Calu3 (cell line): ENCODE measurements at regions of chrX and their contacts with region 1.

Region 1: GRCh38 chrX:103214870-103215424 is at the start of gene BEX4:
- DNase-seq: peak; percentile 2
- H3K4me3 Mint-ChIP-seq: no peak within 1 kb of the TSS
- H3K27ac Mint-ChIP-seq: no peak within 1 kb of the TSS
- H3K4me1 Mint-ChIP-seq: no peaks in the 10 kb centered on the region
- H3K27me3 Mint-ChIP-seq: peaks cover 15% of the 10 kb centered on the region
- CTCF ChIP-seq: no peak
- total RNA-seq, gene BEX4: not detected in 2 replicates

Region 2: DNA sequence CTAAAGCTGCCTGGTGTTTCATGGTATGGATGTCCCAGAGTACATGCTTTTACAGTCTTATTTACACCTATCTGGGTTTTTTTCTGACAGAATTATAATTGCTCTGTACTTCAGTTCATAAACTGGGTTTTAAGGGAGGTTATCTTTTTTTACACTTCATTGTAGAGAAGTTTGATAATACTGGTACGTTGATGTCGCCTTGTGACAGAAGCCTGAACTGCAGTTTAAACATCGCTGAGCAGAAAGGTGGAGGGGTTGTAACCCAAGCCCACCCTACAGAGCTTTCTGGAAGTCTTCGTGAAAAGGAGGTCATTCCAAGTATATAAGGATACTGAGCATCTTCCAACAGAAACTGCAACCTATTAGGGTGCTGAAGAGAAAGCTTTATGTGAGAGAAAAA is 197.4 kb before region 1 on chrX:
- CTCF ChIA-PET with region 1: no interaction called
- intact Hi-C with region 1: no loop called
- DNase-seq: no peak
- H3K4me3 Mint-ChIP-seq: no peak overlapping the region
- H3K27ac Mint-ChIP-seq: no peak overlapping the region
- H3K4me1 Mint-ChIP-seq: no peaks in the 10 kb centered on the region
- H3K27me3 Mint-ChIP-seq: peaks cover 35% of the 10 kb centered on the region
- CTCF ChIP-seq: no peak

Region 3: GRCh38 chrX:103151799-103152198 is 63.1 kb before region 1 on chrX:
- CTCF ChIA-PET with region 1: no interaction called
- intact Hi-C with region 1: no loop called
- DNase-seq: no peak
- H3K4me3 Mint-ChIP-seq: no peak overlapping the region
- H3K27ac Mint-ChIP-seq: peak overlapping the region; percentile 56
- H3K4me1 Mint-ChIP-seq: peaks cover 19% of the 10 kb centered on the region
- H3K27me3 Mint-ChIP-seq: no peaks in the 10 kb centered on the region
- CTCF ChIP-seq: no peak

Region 4: GRCh38 chrX:103248553-103248952 is 33.6 kb after region 1 on chrX:
- CTCF ChIA-PET with region 1: no interaction called
- intact Hi-C with region 1: loop called (anchors 1 kb)
- DNase-seq: no peak
- H3K4me3 Mint-ChIP-seq: no peak overlapping the region
- H3K27ac Mint-ChIP-seq: no peak overlapping the region
- H3K4me1 Mint-ChIP-seq: no peaks in the 10 kb centered on the region
- H3K27me3 Mint-ChIP-seq: peaks cover 21% of the 10 kb centered on the region
- CTCF ChIP-seq: no peak

Region 5: DNA sequence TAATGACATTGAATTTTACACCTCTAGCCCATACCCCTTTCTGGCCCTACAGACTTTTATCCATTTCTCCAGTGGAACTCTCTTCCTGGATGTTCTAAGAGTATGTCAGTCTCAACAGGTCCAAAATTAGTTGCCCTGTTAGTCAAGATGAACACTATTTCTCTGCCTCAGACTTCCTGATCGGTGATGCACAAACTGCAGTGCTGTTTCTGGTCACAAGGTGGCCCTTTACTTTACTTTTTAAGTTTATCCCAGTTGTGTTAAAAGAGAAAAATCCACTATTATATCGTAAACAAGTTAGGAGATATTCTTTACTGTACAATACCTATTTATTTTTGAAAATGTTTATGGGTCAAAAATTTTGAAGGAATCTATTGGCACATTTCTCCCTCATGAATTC is 128.2 kb after region 1 on chrX:
- CTCF ChIA-PET with region 1: no interaction called
- intact Hi-C with region 1: loop called (anchors 5 kb)
- DNase-seq: peak; percentile 43
- H3K4me3 Mint-ChIP-seq: no peak overlapping the region
- H3K27ac Mint-ChIP-seq: no peak overlapping the region
- H3K4me1 Mint-ChIP-seq: no peaks in the 10 kb centered on the region
- H3K27me3 Mint-ChIP-seq: no peaks in the 10 kb centered on the region
- CTCF ChIP-seq: peak; percentile 36

Region 6: DNA sequence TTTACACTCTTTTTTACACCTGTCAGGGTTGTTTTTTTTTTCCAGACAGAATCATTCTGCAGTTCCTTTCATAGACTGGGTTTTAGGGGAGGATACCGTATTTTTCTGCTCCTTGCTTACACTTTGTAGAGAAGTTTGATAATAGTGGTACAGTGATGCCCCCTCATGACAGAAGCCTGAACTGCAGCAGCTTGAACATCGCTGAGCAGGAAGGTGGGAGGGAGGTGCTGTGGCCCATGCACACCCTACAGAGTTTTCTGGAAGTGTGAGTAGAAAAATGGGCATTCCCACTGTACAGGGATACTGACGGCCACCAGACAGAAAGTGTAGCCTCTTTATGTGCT is 249.8 kb after region 1 on chrX:
- CTCF ChIA-PET with region 1: interaction called, 10 read pairs
- intact Hi-C with region 1: loop called (anchors 1 kb)
- DNase-seq: peak; percentile 78
- H3K4me3 Mint-ChIP-seq: no peak overlapping the region
- H3K27ac Mint-ChIP-seq: no peak overlapping the region
- H3K4me1 Mint-ChIP-seq: peaks cover 18% of the 10 kb centered on the region
- H3K27me3 Mint-ChIP-seq: no peaks in the 10 kb centered on the region
- CTCF ChIP-seq: peak; percentile 75

Region 7: GRCh38 chrX:103488332-103488731 is 273.4 kb after region 1 on chrX:
- CTCF ChIA-PET with region 1: interaction called, 6 read pairs
- intact Hi-C with region 1: loop called (anchors 1 kb)
- DNase-seq: no peak
- H3K4me3 Mint-ChIP-seq: no peak overlapping the region
- H3K27ac Mint-ChIP-seq: no peak overlapping the region
- H3K4me1 Mint-ChIP-seq: no peaks in the 10 kb centered on the region
- H3K27me3 Mint-ChIP-seq: no peaks in the 10 kb centered on the region
- CTCF ChIP-seq: no peak